Activated CD8-positive, alpha-beta T cell treated with anti-CD3 and anti-CD28 coated beads, Interleukin-2, amount 10 ng/mL, durations not matched to agents 7 days and 5 days (primary cell): ENCODE measurements at regions of chr10 and their contacts with region 1.

Region 1: DNA sequence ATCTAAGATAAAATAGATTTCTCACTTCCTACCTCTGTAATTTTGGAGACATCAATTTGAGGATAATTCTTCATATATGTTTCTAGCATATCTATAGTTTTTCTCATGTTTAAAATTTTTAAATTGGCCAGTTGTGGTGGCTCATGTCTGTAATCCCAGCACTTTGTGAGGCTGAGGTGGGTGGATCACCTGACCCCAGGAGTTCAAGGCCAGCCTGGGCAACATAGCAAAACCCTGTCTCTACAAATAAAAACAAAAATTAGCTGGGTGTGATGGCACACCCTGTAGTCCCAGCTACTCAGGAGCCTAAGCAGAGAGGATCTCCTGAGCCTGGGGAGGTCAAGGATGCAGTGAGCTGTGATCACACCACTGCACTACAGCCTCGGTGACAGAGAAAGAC is 4.9 kb downstream of the ACBD5 start:
- DNase-seq: no peak
- ATAC-seq: no peak
- H3K4me3 Mint-ChIP-seq: no peak overlapping the region
- H3K27ac Mint-ChIP-seq: no peak overlapping the region
- H3K4me1 Mint-ChIP-seq: peaks cover 7% of the 10 kb centered on the region
- H3K27me3 Mint-ChIP-seq: no peaks in the 10 kb centered on the region

Region 2: DNA sequence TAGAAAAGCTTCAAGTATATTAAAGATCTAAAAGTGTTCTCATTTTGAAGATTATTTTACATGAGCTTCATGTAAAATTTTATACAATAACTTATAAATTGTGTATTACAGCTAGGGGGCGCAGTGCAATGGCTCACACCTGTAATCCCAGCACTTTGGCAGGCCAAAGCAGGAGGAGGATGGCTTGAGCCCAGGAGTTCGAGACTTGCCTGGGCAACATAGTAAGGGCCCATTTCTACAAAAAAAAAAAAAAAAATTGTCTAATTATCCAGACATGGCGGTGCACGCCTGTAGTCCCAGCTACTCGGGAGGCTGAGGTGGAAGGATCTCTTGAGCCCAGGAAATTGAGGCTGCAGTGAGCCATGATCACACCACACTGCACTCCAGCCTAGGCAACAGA is 11.7 kb before region 1 on chr10:
- CTCF ChIA-PET with region 1: interaction called, 22 read pairs
- POLR2A ChIA-PET with region 1: interaction called, 5 read pairs
- DNase-seq: peak; percentile 51
- ATAC-seq: no peak
- H3K4me3 Mint-ChIP-seq: no peak overlapping the region
- H3K27ac Mint-ChIP-seq: peak overlapping the region; percentile 52
- H3K4me1 Mint-ChIP-seq: peaks cover 26% of the 10 kb centered on the region
- H3K27me3 Mint-ChIP-seq: no peaks in the 10 kb centered on the region